ENCODE measurements at regions of chr12 and their contacts with region 1.

Region 1: DNA sequence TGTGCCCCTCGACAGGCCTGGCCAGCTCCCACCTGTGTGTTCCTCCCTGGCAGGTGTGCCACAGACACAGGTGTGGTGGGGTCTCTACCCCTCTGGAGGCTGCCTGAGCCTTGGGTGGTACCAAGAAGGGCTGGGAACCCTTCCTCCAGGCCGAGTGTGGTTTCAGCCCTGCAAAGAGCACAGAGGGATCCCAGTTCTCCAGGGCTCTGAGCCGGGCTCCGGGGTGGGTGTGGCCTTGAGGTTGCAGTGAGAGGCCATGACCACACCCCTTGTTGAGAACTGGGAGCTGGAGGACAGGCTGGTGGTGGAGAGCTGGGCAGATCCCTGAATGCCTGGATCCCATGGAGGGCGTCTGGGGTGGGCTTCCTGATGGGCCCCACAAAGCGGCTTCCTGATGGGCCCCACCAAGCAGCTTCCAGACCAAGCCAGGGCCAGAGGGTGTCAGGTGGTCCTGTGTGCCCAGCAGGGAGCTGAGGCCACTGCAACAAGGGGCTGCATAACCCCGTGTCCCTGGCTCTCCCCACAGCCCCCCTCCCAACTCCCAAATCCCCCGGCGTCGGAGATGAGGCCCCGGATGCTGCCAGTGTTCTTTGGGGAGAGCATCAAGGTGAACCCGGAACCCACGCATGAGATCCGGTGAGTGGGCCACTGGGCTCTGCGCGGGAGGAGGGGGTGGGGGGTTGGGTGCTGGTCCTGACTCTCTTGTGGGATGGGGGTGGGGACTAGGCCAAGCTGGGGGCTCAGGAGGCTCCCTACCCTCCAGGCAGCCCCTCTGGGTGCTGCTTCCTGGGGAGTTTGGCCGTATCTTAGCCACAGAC is 16.6 kb downstream of the RFLNA start:
- DNase-seq: no peak
- H3K4me3 ChIP-seq: no peak overlapping the region
- H3K27ac ChIP-seq: no peak overlapping the region
- H3K4me1 ChIP-seq: no peaks in the 10 kb centered on the region
- H3K27me3 ChIP-seq: no peaks in the 10 kb centered on the region
- CTCF ChIP-seq: no peak
- EP300 ChIP-seq: no peak
- POLR2A ChIP-seq: no peak

Region 2: DNA sequence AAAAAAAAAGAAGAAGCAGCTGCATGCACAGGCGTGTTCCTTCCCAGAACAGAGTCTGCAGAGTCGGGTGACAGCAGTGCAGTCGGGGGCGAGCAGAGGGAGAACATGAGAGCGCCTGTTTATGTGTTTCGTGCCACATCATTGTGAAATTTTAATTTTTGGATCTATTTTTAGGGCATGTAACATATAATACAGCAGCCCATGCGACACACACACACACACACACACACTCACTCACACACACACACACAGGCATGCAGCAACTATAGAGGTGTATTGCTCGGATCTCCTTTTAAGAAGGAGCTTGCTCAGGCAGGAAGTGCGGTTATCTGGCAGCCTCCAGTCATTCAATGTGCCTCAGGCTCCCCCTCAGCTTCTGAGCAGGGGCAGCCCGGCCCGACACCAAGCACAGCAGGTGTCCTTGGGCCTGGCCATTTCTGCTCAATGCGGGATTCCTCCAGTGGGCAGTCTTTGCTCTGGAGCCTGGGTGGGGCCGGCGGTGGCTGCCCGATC is 266.6 kb before region 1 on chr12:
- intact Hi-C with region 1: loop called in 2 of 4 experiments (anchors 5 to 10 kb)
- DNase-seq: no peak
- H3K4me3 ChIP-seq: no peak overlapping the region
- H3K27ac ChIP-seq: no peak overlapping the region
- H3K4me1 ChIP-seq: no peaks in the 10 kb centered on the region
- H3K27me3 ChIP-seq: no peaks in the 10 kb centered on the region
- CTCF ChIP-seq: no peak
- EP300 ChIP-seq: no peak
- POLR2A ChIP-seq: no peak

Measured in ovary (tissue), 10 donors.